Spleen (tissue), 13 donors: ENCODE measurements at regions of chr6 and their contacts with region 1.

Region 1: GRCh38 chr6:53284901-53285300 is 63.8 kb downstream of the ELOVL5 start:
- DNase-seq: no peak
- H3K4me3 ChIP-seq: no peak overlapping the region
- H3K27ac ChIP-seq: peak overlapping the region in 4 of 8 donors; percentile 7 to 43 (median 38)
- H3K4me1 ChIP-seq: peaks cover 21 to 91% (median 62%) of the 10 kb centered on the region in 6 donors
- H3K27me3 ChIP-seq: no peaks in the 10 kb centered on the region
- CTCF ChIP-seq: no peak
- POLR2A ChIP-seq: no peak

Region 2: GRCh38 chr6:52834481-52834880 is 450.4 kb before region 1 on chr6:
- intact Hi-C with region 1: no loop called
- DNase-seq: no peak
- H3K4me3 ChIP-seq: no peak overlapping the region
- H3K27ac ChIP-seq: no peak overlapping the region
- H3K4me1 ChIP-seq: no peaks in the 10 kb centered on the region
- H3K27me3 ChIP-seq: peaks cover 0 to 42% (median 0%) of the 10 kb centered on the region in 7 donors
- CTCF ChIP-seq: no peak
- POLR2A ChIP-seq: no peak

Region 3: GRCh38 chr6:53348371-53349208 is 63.7 kb after region 1 on chr6 and contains the start of gene ELOVL5:
- intact Hi-C with region 1: loop called (anchors 10 kb)
- DNase-seq: peak; percentile 98
- H3K4me3 ChIP-seq: peak within 1 kb of the TSS; percentile 87 to 94 (median 92)
- H3K27ac ChIP-seq: peak within 1 kb of the TSS; percentile 97 to 100 (median 99)
- H3K4me1 ChIP-seq: peaks cover 25 to 53% (median 41%) of the 10 kb centered on the region in 6 donors
- H3K27me3 ChIP-seq: no peaks in the 10 kb centered on the region
- CTCF ChIP-seq: peak in 4 of 11 experiments; percentile 17 to 27 (median 24)
- POLR2A ChIP-seq: peak in 2 of 3 donors; percentile 40 to 90
- total RNA-seq, gene ELOVL5: 89.3 to 113 (median 93.9) TPM